ENCODE measurements at regions of chr1 and their contacts with region 1.

Region 1: DNA sequence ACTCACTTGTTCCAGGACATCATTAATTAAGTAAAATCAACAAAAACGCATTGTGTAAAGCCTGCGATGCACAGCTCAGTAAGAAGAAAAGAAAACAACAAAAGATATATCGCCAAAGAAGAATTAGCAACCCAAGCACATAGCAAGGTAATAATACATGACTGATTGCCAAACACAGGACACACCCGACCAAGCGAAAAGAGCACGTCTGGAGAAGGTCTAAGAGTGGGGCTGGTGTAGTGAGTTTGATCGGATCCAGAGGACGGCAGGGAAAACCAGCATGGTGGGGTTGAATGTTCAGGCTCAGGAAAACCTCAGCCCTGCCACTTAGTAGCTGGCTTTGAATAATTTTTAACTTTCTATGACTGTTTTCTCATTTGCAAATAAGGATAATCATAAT is 69.8 kb downstream of the JAK1 start:
- DNase-seq: no peak
- ATAC-seq: no peak
- H3K4me3 Mint-ChIP-seq: no peak overlapping the region
- H3K27ac Mint-ChIP-seq: no peak overlapping the region
- H3K4me1 Mint-ChIP-seq: peaks cover 66% of the 10 kb centered on the region
- H3K27me3 Mint-ChIP-seq: no peaks in the 10 kb centered on the region

Region 2: DNA sequence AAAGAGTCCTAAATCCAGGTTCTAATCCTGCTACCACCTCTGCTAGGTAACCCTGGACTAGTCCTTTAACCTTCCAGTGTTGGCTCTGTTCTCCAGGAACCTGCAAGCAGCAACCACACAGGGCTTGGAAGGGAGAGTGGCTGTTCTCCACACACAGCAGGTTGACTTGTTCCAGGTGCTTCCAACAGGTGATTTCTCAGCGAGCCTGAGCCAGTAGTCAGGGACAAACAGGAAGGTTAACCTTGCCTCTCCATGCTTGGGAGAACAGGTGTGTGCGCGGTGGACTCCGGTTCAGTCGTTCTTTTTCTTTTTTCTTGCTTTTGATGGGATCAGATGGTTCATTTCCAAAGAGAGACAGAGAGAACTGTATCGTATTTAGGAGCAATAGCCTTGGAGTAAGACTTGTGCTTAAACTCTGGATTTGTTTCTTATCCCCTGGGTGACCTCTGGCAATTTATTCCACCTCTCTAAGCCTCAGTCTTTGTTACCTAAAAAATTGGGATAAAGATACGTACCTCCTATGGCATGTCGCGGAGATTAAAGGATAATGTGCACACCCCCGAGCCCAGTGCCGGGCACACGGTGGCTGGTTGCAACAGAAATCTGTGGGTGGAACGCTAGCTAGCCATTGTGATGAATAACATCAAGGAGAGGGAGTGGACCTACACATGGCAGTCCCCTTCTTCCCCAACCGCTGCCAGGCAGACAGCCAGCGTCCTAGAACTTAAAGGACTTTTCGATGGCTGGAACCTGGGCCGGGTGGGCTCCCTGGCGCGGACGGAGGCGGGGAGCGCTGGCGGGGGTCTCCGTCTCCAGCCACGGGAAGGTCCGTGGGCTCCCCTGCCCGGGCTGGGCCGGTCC is 427.2 kb before region 1 on chr1:
- CTCF ChIA-PET with region 1: no interaction called
- POLR2A ChIA-PET with region 1: interaction called, 12 read pairs
- DNase-seq: no peak
- ATAC-seq: peak; percentile 1
- H3K4me3 Mint-ChIP-seq: peak overlapping the region; percentile 59
- H3K27ac Mint-ChIP-seq: no peak overlapping the region
- H3K4me1 Mint-ChIP-seq: peaks cover 14% of the 10 kb centered on the region
- H3K27me3 Mint-ChIP-seq: peaks cover 42% of the 10 kb centered on the region

Region 3: DNA sequence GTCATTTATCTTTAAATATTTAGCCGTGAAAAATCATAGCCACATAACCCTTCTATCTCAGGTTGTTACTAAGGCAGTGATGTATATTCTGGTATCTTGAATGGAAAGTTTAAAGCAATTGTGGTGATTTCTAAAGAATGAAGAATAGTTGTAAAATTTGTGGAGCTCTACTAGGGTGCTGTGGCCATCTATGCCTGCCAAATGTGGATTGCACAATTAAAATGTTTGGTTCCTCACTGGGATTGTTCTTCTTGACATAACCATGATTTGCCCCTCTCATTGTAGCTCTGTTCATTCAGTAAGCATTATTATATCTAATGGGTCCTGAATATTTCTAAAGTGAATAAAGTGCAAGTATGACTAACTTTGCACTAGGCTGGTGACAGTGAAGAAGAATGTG is 301.5 kb after region 1 on chr1:
- CTCF ChIA-PET with region 1: no interaction called
- POLR2A ChIA-PET with region 1: no interaction called
- DNase-seq: no peak
- ATAC-seq: no peak
- H3K4me3 Mint-ChIP-seq: no peak overlapping the region
- H3K27ac Mint-ChIP-seq: no peak overlapping the region
- H3K4me1 Mint-ChIP-seq: peaks cover 13% of the 10 kb centered on the region
- H3K27me3 Mint-ChIP-seq: no peaks in the 10 kb centered on the region